ENCODE measurements at regions of chr12 and their contacts with region 1.

Region 1: DNA sequence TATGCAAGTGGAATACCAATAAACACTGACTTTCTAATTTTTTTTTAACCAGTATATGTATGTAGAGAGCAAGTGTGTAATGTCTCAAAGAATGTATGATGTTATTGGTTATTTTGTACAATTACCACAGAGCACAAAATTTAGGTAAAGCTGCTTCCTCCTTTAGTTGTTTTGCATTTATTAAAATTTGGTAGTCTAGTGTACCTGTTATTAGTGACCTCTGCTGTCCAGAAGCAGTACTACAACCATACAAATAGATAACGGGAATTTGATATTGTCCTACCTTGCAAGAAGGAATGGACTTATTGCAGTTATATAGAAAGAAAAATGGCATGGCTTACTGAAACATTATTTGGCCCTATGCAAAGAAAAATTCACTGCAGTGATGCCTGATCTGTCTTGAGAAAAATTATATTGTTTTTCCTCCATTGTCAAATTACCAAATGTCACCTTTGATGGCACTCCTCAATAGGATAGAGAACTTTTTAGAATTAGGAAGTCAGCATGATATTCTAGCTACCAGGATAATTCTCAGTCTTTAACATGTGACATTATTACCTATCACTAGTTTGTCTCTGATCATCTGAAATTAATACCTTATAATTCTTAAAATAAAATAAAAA is 153.9 kb upstream of the RMST start:
- DNase-seq: no peak
- CTCF ChIP-seq: peak; percentile 61

Region 2: GRCh38 chr12:97097734-97098133 is 211.0 kb before region 1 on chr12:
- CTCF ChIA-PET with region 1: no interaction called
- POLR2A ChIA-PET with region 1: no interaction called
- DNase-seq: no peak
- CTCF ChIP-seq: no peak

Region 3: DNA sequence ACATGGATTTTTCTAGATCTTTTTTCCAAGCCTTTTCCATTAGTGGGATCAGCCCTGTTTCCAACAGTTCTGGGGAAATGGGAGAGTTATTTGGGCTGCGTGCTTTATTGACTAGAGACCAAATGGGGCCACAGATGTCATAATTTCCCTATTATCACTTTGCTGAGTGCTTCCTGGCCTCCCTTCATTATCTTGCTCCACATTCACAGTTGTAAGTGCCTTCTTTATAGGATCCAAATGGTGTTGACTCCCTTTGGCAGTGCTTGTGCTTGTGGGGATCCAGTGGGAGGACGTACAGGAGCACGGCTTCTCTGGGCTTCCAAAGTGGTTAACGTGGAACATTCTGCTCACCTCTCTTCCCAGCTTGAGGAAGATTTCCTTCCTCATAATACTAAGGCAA is 12.9 kb after region 1 on chr12:
- CTCF ChIA-PET with region 1: interaction called, 18 read pairs
- POLR2A ChIA-PET with region 1: no interaction called
- DNase-seq: no peak
- CTCF ChIP-seq: no peak

Region 4: GRCh38 chr12:98162906-98163678 is 854.4 kb after region 1 on chr12:
- CTCF ChIA-PET with region 1: no interaction called
- POLR2A ChIA-PET with region 1: no interaction called
- DNase-seq: no peak
- CTCF ChIP-seq: no peak